GM12878 (cell line): ENCODE measurements at regions of chr14 and their contacts with region 1.

Region 1: DNA sequence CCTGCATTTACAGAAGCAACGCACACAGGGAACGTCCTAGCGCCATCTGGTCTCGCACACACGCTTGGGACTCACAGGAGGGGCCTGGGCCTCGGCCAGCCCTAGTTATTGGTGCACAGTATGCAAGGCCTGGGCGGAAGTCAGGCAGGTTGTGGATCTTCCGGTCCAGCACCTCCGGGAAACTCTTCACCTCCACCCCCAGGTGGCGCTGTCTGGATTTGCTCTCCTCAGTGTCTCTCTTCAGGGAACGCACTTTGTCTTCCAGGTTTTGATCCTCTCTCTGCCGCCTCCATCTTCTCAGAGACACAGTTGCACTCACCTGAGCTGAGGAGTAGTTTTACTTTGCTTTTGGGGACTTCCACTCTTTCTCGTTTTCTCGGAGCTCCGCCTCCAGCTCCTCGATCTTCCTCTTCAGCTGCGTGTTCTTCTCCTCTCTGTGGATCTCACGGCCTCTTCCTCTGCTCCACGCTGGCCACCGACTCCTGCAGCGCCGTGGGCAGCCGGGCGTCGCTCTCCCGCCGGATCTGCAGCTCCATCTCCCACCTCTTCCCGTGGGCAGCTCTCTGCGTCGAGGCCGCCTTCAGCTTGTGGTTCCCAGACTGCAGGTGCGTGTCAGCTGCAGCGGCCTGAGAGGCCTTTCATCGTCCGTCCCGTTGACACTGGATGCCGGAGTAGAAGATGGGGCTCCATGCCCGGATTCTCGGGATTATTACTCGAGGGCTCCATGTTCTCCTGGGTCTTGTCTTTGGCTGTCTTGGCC is 933.8 kb downstream of the TMEM121 start:
- DNase-seq: no peak
- ATAC-seq: peak; percentile 91
- H3K4me3 ChIP-seq: no peak overlapping the region
- H3K27ac ChIP-seq: no peak overlapping the region
- H3K4me1 ChIP-seq: no peaks in the 10 kb centered on the region
- H3K27me3 ChIP-seq: no peaks in the 10 kb centered on the region
- CTCF ChIP-seq: peak; percentile 41 to 56 (median 56)
- EP300 ChIP-seq: no peak
- POLR2A ChIP-seq: no peak
- RAD21 ChIP-seq: peak; percentile 45

Region 2: GRCh38 chr14:106120101-106120500 is 340.1 kb before region 1 on chr14:
- CTCF ChIA-PET with region 1: no interaction called
- POLR2A ChIA-PET with region 1: no interaction called
- RAD21 ChIA-PET with region 1: no interaction called
- SMC1A ChIA-PET with region 1: no interaction called
- in situ Hi-C with region 1: no loop called
- intact Hi-C with region 1: no loop called
- DNase-seq: no peak
- ATAC-seq: no peak
- H3K4me3 ChIP-seq: no peak overlapping the region
- H3K27ac ChIP-seq: no peak overlapping the region
- H3K4me1 ChIP-seq: no peaks in the 10 kb centered on the region
- H3K27me3 ChIP-seq: no peaks in the 10 kb centered on the region
- CTCF ChIP-seq: no peak
- EP300 ChIP-seq: no peak
- POLR2A ChIP-seq: no peak
- RAD21 ChIP-seq: no peak

Region 3: DNA sequence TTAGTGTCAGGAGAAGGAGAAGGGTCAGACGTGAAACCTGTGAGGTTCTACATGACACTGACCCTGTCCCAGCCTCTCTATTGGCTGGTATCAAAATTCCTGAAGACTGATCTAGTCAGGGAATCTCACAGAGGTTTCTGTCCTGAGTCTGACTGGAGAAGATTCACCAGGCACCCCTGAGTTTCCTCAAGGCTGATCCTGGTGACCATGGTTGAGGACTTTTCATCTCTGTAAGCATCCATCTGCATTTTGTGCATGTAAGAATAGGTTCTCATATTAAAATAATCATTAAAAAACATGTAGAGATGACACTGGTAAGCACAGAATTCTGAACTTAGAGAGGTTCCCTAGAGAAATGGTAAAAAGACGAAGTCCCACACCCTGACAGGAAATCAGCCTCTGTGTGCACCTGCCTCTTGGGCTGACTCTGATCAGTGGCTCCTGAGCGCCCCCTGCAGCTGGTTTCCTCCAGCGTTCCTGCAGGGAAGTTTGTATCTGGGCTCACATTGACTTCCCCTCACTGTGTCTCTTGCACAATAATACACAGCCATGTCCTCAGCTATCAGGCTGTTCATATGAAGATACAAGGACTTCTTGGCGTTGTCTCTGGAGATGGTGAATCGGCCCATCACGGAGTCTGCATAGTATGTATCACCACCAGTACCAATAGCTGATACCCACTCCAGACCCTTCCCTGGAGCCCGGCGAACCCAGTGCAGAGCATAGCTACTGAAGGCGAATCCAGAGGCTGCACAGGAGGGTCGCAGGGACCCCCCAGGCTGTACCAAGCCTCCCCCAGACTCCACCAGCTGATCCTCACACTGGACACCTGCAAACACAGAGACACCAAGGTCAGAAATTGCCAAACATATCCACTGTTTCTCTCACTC is 58.1 kb after region 1 on chr14:
- CTCF ChIA-PET with region 1: interaction called, 4 read pairs
- POLR2A ChIA-PET with region 1: no interaction called
- RAD21 ChIA-PET with region 1: interaction called, 3 read pairs
- SMC1A ChIA-PET with region 1: interaction called, 4 read pairs
- in situ Hi-C with region 1: no loop called
- intact Hi-C with region 1: loop called (anchors 5 kb)
- DNase-seq: no peak
- ATAC-seq: peak; percentile 84
- H3K4me3 ChIP-seq: no peak overlapping the region
- H3K27ac ChIP-seq: no peak overlapping the region
- H3K4me1 ChIP-seq: peaks cover 10% of the 10 kb centered on the region
- H3K27me3 ChIP-seq: no peaks in the 10 kb centered on the region; a peak in 1 of 4 replicates
- CTCF ChIP-seq: peak; percentile 63 to 76 (median 75)
- EP300 ChIP-seq: no peak
- POLR2A ChIP-seq: no peak
- RAD21 ChIP-seq: peak; percentile 78